ENCODE measurements at regions of chr10 and their contacts with region 1.

Region 1: GRCh38 chr10:133422821-133423771 is 1.3 kb downstream of the SPRN start:
- DNase-seq: no peak
- H3K4me3 ChIP-seq: peak overlapping the region; percentile 15 to 22
- H3K27ac ChIP-seq: no peak overlapping the region
- H3K4me1 ChIP-seq: peaks cover 0 to 2% of the 10 kb centered on the region in 2 donors
- H3K27me3 ChIP-seq: no peaks in the 10 kb centered on the region
- CTCF ChIP-seq: no peak

Region 2: DNA sequence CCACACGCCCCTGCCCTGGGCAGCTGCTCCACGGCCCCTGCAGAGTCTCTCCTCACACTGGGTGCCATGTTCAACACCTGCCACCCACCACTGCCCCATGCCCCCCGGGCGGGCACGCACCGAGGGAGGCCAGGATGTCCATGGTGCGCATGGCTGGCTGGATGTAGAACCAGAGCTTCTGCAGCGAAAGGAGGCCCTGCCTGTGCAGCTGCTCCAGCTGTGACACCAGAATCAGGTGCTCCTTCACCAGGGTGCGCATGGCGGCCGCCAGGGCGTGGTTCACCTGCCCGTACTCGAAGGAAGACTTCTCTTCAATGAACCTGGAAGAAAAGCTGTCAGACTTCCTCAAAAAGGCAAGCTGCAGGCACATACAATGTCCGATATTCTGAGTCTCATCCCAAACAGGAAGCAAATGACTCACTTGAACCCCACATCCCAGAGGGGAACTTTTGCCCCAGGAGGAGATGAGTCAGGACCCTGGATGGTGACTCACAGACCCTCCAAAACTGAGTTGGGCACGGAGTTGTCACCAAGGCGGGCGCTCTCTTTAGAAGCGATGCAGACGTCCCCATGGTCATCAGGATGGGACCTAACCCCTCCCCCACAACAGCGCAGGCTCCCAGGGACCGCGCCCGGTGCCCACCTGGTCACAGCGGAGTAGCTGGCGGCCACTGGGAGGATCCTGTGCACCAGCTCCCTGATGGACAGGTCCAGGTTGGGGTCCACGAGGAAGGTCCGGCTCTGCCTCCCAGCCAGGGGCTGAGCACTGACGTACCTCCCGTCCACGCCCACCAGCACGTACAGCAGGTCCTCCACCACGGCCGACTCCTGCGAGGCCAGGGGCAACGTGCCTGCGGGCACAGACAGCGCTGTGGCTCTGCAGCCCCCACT is 129.9 kb before region 1 on chr10:
- intact Hi-C with region 1: no loop called
- DNase-seq: no peak
- H3K4me3 ChIP-seq: no peak overlapping the region
- H3K27ac ChIP-seq: peak overlapping the region in 1 of 2 donors; percentile 26
- H3K4me1 ChIP-seq: no peaks in the 10 kb centered on the region
- H3K27me3 ChIP-seq: no peaks in the 10 kb centered on the region
- CTCF ChIP-seq: no peak

Region 3: GRCh38 chr10:133453516-133454203 is 30.6 kb after region 1 on chr10 and contains the start of gene SCART1:
- intact Hi-C with region 1: no loop called
- DNase-seq: no peak
- H3K4me3 ChIP-seq: no peak within 1 kb of the TSS
- H3K27ac ChIP-seq: no peak within 1 kb of the TSS
- H3K4me1 ChIP-seq: no peaks in the 10 kb centered on the region
- H3K27me3 ChIP-seq: no peaks in the 10 kb centered on the region
- CTCF ChIP-seq: no peak
- total RNA-seq, gene SCART1: 4.8 TPM

Region 4: DNA sequence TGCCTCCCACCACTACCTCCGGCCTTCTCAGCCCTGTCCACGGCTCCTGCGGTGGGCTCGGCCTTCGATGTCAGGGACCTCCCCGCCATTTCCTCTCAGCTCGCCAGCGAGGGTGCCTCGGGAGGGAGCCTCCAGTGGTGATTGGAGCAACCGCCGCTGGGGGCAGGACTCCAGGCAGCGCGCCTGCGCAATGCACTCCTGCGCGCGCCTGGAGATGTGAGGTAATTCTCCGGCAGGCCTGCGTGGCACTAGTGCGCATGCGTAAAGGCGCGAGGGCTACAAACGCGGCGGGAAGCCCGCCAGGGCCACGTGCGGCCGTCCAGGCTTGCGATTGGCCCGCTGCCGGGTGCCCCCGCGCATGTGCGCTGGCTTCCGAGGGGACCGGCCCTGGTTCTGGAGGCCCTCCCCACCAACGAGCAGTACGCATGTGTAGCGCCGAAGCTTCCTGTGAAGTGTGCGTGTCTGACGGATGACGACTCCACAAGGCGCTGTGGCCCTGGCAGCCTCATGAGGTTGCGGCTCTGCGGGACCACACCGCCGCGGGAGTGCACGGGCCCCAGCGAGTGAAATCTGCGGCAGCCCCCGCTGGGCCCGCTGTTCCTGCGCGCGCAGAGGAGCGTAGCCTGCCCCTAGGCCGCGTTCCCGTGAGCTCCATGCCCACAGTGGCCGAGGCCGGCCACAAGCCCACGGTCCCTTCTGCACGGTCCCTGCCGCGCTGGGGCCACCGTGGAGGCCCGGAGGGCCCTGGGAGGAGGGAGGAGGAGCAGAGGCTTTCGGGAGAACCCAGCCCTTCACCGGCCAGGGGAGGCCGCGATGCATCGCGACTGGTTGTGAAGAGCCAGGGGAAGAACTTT is 142.6 kb after region 1 on chr10 and contains the start of gene SYCE1:
- intact Hi-C with region 1: loop called (anchors 5 kb)
- DNase-seq: no peak
- H3K4me3 ChIP-seq: no peak within 1 kb of the TSS
- H3K27ac ChIP-seq: no peak within 1 kb of the TSS
- H3K4me1 ChIP-seq: no peaks in the 10 kb centered on the region
- H3K27me3 ChIP-seq: no peaks in the 10 kb centered on the region
- CTCF ChIP-seq: no peak
- total RNA-seq, gene SYCE1: not detected

Measured in ascending aorta (tissue), 2 donors.